Breast epithelium (tissue), 4 donors: ENCODE measurements at regions of chr5 and their contacts with region 1.

Region 1: GRCh38 chr5:93201061-93201460 is 380.0 kb downstream of the NR2F1-AS1 start:
- DNase-seq: no peak
- H3K4me3 ChIP-seq: no peak overlapping the region
- H3K27ac ChIP-seq: peak overlapping the region in 1 of 2 donors; percentile 20
- H3K4me1 ChIP-seq: no peaks in the 10 kb centered on the region
- H3K27me3 ChIP-seq: no peaks in the 10 kb centered on the region
- CTCF ChIP-seq: no peak
- POLR2A ChIP-seq: no peak

Region 2: DNA sequence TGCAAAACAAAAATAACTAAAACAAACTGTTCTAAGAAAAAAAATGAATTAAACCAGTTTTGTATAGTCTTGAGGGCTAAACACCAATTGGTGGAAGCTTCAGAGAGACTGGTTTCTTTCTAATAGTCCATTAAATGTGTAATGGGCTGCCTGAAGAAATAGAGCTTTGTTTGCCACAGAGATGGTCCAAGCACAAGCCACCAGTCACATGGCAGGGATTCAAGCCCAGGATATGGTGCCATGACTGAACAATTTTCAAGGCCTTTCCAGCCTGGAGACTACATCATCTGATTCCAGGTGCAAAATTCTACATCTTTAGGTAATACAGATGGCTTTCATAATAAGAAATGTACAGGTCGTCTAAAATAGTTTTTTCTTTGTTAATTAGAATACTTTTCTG is 24.7 kb after region 1 on chr5:
- intact Hi-C with region 1: loop called (anchors 2 kb)
- DNase-seq: no peak
- H3K4me3 ChIP-seq: no peak overlapping the region
- H3K27ac ChIP-seq: peak overlapping the region; percentile 23 to 52
- H3K4me1 ChIP-seq: no peaks in the 10 kb centered on the region
- H3K27me3 ChIP-seq: no peaks in the 10 kb centered on the region
- CTCF ChIP-seq: no peak
- POLR2A ChIP-seq: no peak

Region 3: GRCh38 chr5:93990504-93991070 is 789.5 kb after region 1 on chr5:
- intact Hi-C with region 1: no loop called
- DNase-seq: no peak
- H3K4me3 ChIP-seq: no peak overlapping the region
- H3K27ac ChIP-seq: no peak overlapping the region
- H3K4me1 ChIP-seq: no peaks in the 10 kb centered on the region
- H3K27me3 ChIP-seq: no peaks in the 10 kb centered on the region
- CTCF ChIP-seq: no peak
- POLR2A ChIP-seq: no peak